Ascending aorta (tissue), 2 donors: ENCODE measurements at regions of chr5 and their contacts with region 1.

Region 1: DNA sequence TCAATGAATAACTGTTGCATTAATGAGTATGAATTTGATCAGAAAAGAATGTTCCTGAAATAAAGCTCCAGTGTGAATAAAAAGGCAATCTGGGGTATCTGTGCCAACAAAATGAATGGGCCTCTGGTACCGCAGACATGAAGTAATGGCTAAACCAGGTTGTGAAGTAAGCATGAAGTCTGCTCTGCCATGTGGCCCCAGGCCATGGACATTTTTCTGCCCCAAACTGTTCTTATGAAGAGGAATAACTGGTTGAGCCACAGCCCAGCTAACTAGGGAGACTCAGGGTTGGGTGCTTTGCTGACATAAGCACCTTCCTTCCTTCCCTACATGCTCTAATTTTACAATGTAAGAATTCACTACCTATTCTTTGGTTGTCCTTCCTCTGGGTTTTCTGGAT is 147.4 kb upstream of the LRRTM2 start:
- DNase-seq: peak; percentile 48 to 89
- H3K4me3 ChIP-seq: no peak overlapping the region
- H3K27ac ChIP-seq: peak overlapping the region; percentile 68 to 76
- H3K4me1 ChIP-seq: peaks cover 5 to 27% of the 10 kb centered on the region in 2 donors
- H3K27me3 ChIP-seq: no peaks in the 10 kb centered on the region
- CTCF ChIP-seq: no peak

Region 2: GRCh38 chr5:138752951-138753793 is 269.4 kb before region 1 on chr5 and contains the start of gene CTNNA1:
- intact Hi-C with region 1: loop called (anchors 5 kb)
- DNase-seq: peak; percentile 13 to 86
- H3K4me3 ChIP-seq: peak within 1 kb of the TSS; percentile 93 to 98
- H3K27ac ChIP-seq: peak within 1 kb of the TSS; percentile 98 to 100
- H3K4me1 ChIP-seq: peaks cover 6 to 24% of the 10 kb centered on the region in 2 donors
- H3K27me3 ChIP-seq: no peaks in the 10 kb centered on the region
- CTCF ChIP-seq: no peak
- total RNA-seq, gene CTNNA1: 310 TPM

Region 3: GRCh38 chr5:138927979-138928378 is 94.5 kb before region 1 on chr5:
- intact Hi-C with region 1: loop called (anchors 5 kb)
- DNase-seq: peak in 1 of 2 donors; percentile 71
- H3K4me3 ChIP-seq: no peak overlapping the region
- H3K27ac ChIP-seq: peak overlapping the region; percentile 62 to 77
- H3K4me1 ChIP-seq: peaks cover 3 to 24% of the 10 kb centered on the region in 2 donors
- H3K27me3 ChIP-seq: no peaks in the 10 kb centered on the region
- CTCF ChIP-seq: no peak

Region 4: GRCh38 chr5:138975098-138975847 is 47.3 kb before region 1 on chr5:
- intact Hi-C with region 1: loop called (anchors 2 kb)
- DNase-seq: peak in 1 of 2 donors; percentile 73
- H3K4me3 ChIP-seq: no peak overlapping the region
- H3K27ac ChIP-seq: peak overlapping the region; percentile 82 to 88
- H3K4me1 ChIP-seq: peaks cover 11 to 47% of the 10 kb centered on the region in 2 donors
- H3K27me3 ChIP-seq: no peaks in the 10 kb centered on the region
- CTCF ChIP-seq: no peak

Region 5: GRCh38 chr5:138981586-138981985 is 40.9 kb before region 1 on chr5:
- intact Hi-C with region 1: loop called (anchors 2 kb)
- DNase-seq: peak in 1 of 2 donors; percentile 63
- H3K4me3 ChIP-seq: no peak overlapping the region
- H3K27ac ChIP-seq: peak overlapping the region; percentile 14 to 74
- H3K4me1 ChIP-seq: peaks cover 0 to 47% of the 10 kb centered on the region in 2 donors
- H3K27me3 ChIP-seq: no peaks in the 10 kb centered on the region
- CTCF ChIP-seq: no peak

Region 6: DNA sequence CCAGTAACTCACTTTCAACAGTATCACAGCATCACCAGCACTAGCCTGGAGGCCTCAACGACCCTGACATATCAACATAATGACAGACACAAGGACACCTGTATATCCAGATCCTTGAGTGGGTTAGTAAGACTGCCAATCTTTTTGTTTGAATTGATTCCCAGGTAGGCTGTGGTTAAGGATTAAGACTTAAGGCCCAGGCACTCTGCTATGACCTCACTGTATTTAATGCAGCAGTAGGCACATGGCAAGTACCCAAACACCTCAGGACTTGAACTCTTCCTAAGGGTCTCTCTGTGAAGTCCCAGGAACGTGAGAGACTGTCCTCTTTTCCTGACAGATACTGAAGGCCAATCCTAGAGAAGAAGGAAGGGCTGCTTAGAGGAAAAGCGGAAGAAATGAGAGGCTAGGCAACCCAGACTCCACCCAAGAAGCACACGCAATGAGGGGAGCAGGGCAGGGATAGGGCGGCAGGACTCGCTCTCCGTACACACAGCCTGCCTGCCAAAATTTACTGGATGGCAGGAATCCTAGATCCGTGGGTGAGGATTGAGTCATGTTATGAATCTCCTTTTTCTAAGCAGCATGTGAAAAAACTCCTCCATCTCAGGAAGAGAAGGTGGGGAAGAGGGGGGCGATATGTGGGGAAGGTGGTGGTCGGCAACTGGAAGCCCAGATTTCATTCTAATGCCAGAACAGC is 82.2 kb after region 1 on chr5:
- intact Hi-C with region 1: loop called (anchors 5 kb)
- DNase-seq: peak; percentile 42 to 92
- H3K4me3 ChIP-seq: peak overlapping the region; percentile 3 to 23
- H3K27ac ChIP-seq: peak overlapping the region; percentile 90 to 92
- H3K4me1 ChIP-seq: peaks cover 0 to 39% of the 10 kb centered on the region in 2 donors
- H3K27me3 ChIP-seq: no peaks in the 10 kb centered on the region
- CTCF ChIP-seq: no peak

Region 7: GRCh38 chr5:139474890-139475791 is 452.6 kb after region 1 on chr5:
- intact Hi-C with region 1: no loop called
- DNase-seq: no peak
- H3K4me3 ChIP-seq: no peak overlapping the region
- H3K27ac ChIP-seq: peak overlapping the region in 1 of 2 donors; percentile 25
- H3K4me1 ChIP-seq: peaks cover 0 to 9% of the 10 kb centered on the region in 2 donors
- H3K27me3 ChIP-seq: no peaks in the 10 kb centered on the region
- CTCF ChIP-seq: no peak